Heart right ventricle (tissue), 16 donors: ENCODE measurements at regions of chrX and their contacts with region 1.

Region 1: DNA sequence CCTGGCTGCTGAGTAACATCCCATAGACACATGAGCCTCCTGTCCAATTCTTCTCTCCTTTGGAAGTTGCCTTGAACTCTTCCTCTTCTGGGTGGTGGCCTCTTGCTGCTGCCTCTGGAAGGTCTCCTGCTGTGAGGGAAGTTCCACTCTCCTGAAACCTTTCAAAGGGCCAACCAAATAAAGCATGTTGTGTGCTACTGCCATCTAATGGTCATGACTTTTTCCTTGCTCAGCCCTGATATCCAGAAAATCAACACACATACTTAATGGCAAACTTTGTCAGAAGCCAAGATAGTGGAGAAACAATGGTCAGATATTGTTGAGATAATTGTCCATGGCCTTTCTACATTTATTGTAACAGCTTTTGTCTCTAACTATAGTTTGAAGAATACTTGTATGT is 19.1 kb upstream of the ZXDA start:
- DNase-seq: no peak
- ATAC-seq: peak in 3 of 8 donors; percentile 42 to 61 (median 43)
- H3K4me3 ChIP-seq: no peak overlapping the region
- H3K27ac ChIP-seq: no peak overlapping the region
- H3K4me1 ChIP-seq: no peaks in the 10 kb centered on the region
- H3K27me3 ChIP-seq: peaks cover 0 to 6% (median 0%) of the 10 kb centered on the region in 7 donors
- CTCF ChIP-seq: peak; percentile 12 to 61 (median 48)

Region 2: GRCh38 chrX:57573754-57574153 is 355.6 kb before region 1 on chrX:
- intact Hi-C with region 1: loop called in 1 of 10 experiments (anchors 10 kb)
- DNase-seq: no peak
- ATAC-seq: no peak
- H3K4me3 ChIP-seq: no peak overlapping the region
- H3K27ac ChIP-seq: no peak overlapping the region
- H3K4me1 ChIP-seq: no peaks in the 10 kb centered on the region
- H3K27me3 ChIP-seq: no peaks in the 10 kb centered on the region
- CTCF ChIP-seq: peak in 7 of 9 donors; percentile 28 to 51 (median 43)

Region 3: GRCh38 chrX:57587607-57588006 is 341.8 kb before region 1 on chrX:
- intact Hi-C with region 1: loop called in 2 of 10 experiments (anchors 10 kb)
- DNase-seq: no peak
- ATAC-seq: no peak
- H3K4me3 ChIP-seq: no peak overlapping the region
- H3K27ac ChIP-seq: no peak overlapping the region
- H3K4me1 ChIP-seq: peaks cover 0 to 6% (median 5%) of the 10 kb centered on the region in 9 donors
- H3K27me3 ChIP-seq: peaks cover 0 to 11% (median 0%) of the 10 kb centered on the region in 7 donors
- CTCF ChIP-seq: no peak

Region 4: GRCh38 chrX:58025979-58026378 is 96.6 kb after region 1 on chrX:
- intact Hi-C with region 1: loop called in 1 of 10 experiments (anchors 10 kb)
- DNase-seq: peak in 1 of 2 donors; percentile 8
- ATAC-seq: no peak
- H3K4me3 ChIP-seq: no peak overlapping the region
- H3K27ac ChIP-seq: no peak overlapping the region
- H3K4me1 ChIP-seq: no peaks in the 10 kb centered on the region
- H3K27me3 ChIP-seq: peaks cover 0 to 24% (median 0%) of the 10 kb centered on the region in 7 donors
- CTCF ChIP-seq: peak in 8 of 9 donors; percentile 21 to 66 (median 58)